ENCODE measurements at regions of chr4 and their contacts with region 1.

Region 1: DNA sequence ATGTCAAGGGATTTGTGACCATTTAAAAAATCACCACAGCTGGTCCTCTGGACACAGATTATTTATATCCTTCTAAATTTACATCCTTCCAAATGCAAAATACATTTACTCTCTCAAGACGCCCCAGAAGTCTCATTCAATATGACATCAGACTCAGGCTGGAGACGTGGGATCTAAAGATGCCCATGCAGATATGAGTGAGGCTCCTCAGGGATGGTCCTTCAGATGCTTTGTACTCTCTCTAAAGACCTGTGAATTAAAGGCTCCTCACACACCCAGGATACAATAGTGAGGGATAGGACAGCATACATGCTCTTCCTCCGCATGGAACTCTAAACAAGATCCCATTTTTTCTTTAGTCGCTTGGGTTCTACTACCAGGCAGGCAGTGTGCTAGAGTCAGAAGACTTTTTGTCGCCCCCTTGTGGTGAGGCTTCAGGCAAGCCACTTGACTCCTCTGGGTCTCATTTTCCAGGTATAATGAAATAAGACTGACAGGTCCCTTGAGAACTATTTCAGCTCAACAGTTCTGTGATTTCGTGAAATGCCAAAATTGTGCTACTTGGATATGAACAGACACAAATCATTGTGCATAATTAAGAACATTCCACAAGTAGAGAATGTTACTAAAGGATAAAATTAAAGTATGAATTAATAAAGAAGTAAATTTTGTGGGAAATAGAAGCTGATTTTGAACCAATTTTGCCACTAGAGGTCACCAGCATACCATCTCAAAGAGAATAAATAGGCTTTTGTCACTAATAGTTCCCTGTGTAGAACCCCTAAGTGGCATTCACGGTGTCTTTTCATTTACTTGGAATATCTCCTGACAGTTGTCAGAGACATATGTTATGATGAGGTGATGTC is 13.7 kb upstream of the SCOC start:
- H3K4me3 ChIP-seq: no peak overlapping the region
- H3K27ac ChIP-seq: no peak overlapping the region
- H3K4me1 ChIP-seq: peaks cover 6% of the 10 kb centered on the region; the same call in 1 of the 2 replicates
- CTCF ChIP-seq: 0 out of 2 replicates have a peak, but pooled peaks have one; percentile 33

Region 2: DNA sequence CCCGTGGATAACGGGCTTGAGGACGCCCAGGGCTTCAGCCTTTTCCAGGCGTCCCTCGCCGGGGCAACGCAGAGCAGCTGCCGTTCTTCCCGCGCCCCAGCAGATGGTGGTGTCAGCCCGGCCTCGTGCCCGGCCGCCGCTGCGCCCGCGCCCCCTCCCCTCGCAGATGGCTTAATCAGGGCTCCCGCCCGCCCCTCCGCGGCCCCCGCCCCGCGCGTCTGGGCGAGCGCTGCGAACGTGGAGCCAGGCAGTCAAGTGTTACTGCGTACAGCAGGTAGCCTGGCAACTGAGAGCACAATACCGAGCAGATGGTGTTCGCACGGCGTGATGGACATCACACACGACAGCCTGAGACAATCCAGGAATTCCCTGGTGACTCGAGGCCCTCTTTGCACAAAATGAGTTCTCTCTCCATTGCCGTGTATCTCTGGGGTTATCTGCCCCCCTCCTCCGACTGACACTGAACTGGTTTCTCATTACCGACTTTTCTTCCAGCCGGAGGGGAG is 624.9 kb before region 1 on chr4:
- CTCF ChIA-PET with region 1: interaction called, 12 read pairs
- POLR2A ChIA-PET with region 1: no interaction called
- H3K4me3 ChIP-seq: peak overlapping the region; percentile 1
- H3K27ac ChIP-seq: no peak overlapping the region
- H3K4me1 ChIP-seq: peaks cover 5% of the 10 kb centered on the region; the same call in 1 of the 2 replicates
- CTCF ChIP-seq: peak; percentile 76

Region 3: DNA sequence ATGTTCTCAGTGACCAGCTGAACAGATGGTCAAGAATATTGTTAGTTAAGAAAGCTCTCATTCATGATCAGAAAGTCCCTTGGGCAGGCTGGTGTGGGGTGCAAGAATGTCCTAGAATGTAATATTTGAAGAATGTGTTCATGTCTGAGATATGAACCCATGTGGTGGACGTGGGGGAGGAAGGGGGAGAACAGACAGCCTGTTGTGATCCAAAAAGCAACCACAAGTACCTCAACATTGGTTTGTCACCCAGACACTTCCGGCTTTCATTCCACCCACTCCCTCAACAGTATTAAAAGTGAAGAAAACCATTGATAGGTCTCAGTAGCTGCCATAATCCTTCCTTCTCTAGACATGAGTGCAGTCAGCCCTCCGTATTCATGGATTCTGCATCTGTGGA is 288.0 kb before region 1 on chr4:
- CTCF ChIA-PET with region 1: no interaction called
- POLR2A ChIA-PET with region 1: no interaction called
- H3K4me3 ChIP-seq: no peak overlapping the region
- H3K27ac ChIP-seq: no peak overlapping the region
- H3K4me1 ChIP-seq: no peaks in the 10 kb centered on the region
- CTCF ChIP-seq: no peak

Region 4: DNA sequence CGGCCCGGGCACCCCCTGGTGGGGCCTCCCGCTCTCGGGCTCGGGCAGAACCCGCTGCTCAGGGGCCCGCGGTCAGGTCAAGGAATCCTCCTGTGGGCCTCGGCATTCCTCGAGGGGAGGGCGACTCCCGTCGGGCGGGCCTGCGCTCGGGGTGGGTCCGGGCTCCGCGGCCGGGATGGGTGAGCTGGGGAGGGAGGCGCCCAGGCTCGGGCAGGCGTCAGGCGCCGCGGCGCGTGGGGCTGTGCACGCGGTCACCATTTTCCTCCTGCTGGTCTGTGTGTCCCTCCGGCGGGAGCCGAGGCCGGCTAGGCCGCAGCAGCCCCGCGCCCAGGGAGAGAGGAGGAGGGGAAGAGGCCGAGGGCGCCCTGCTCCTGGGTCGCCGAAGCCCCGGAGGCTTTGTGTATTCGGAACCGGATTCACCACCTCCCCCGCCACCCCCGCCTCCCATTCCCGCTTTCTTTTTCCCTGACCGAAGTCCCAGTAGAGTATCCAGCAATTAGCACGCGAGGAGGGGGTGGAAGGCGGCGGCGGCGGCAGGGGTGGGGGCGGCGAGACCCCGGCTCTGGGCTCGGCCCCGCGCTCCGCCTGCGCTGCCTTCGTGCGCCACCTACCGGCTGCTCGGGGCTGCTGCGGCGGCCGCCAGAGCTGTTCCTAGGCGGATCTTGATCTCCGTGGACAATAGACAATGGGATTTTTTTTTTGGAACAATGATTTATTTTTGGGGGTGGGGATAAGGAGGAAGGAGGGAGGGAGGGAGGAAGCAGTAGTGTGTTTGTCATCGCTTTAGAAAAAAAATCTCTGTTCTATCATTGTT is 106.8 kb before region 1 on chr4:
- CTCF ChIA-PET with region 1: interaction called, 11 read pairs
- POLR2A ChIA-PET with region 1: no interaction called
- H3K4me3 ChIP-seq: peak overlapping the region; percentile 35
- H3K27ac ChIP-seq: peak overlapping the region; percentile 65; the same call in 1 of the 2 replicates
- H3K4me1 ChIP-seq: no peaks in the 10 kb centered on the region
- CTCF ChIP-seq: peak; percentile 3; the same call in 1 of the 2 replicates

Region 5: DNA sequence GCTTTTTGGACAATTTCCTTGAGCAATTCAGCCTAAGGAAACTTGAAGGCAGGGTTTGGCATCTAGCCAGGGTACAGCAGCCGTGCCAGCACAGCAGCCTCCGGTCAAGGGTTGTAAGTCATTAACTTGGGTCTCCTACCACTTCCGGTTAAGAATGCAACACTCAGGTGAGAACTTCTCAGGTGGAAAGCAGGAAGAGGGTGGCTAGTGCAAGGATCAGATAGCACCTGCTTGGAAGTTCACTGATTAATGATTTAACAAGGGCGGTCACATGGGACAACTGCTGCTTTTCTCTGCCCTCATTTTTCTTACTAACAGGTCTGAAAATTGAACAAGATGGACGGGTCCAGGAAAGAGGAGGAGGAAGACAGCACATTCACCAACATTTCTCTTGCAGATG is 16.5 kb before region 1 on chr4:
- CTCF ChIA-PET with region 1: interaction called, 10 read pairs
- POLR2A ChIA-PET with region 1: no interaction called
- H3K4me3 ChIP-seq: no peak overlapping the region
- H3K27ac ChIP-seq: no peak overlapping the region
- H3K4me1 ChIP-seq: no peaks in the 10 kb centered on the region
- CTCF ChIP-seq: no peak

Region 6: GRCh38 chr4:140388015-140388414 is 28.2 kb after region 1 on chr4:
- CTCF ChIA-PET with region 1: interaction called, 12 read pairs
- POLR2A ChIA-PET with region 1: no interaction called
- H3K4me3 ChIP-seq: no peak overlapping the region
- H3K27ac ChIP-seq: no peak overlapping the region
- H3K4me1 ChIP-seq: no peaks in the 10 kb centered on the region
- CTCF ChIP-seq: no peak

Region 7: GRCh38 chr4:140851032-140851636 is 491.3 kb after region 1 on chr4:
- CTCF ChIA-PET with region 1: interaction called, 13 read pairs
- POLR2A ChIA-PET with region 1: no interaction called
- H3K4me3 ChIP-seq: no peak overlapping the region
- H3K27ac ChIP-seq: no peak overlapping the region
- H3K4me1 ChIP-seq: no peaks in the 10 kb centered on the region
- CTCF ChIP-seq: peak; percentile 66

Measured in HEK293 (cell line).